ENCODE measurements at regions of chr1 and their contacts with region 1.

Region 1: GRCh38 chr1:67500413-67500959 is 70.3 kb upstream of the SERBP1 start:
- DNase-seq: peak; percentile 87
- ATAC-seq: peak; percentile 99
- H3K4me3 ChIP-seq: peak overlapping the region in 1 of 2 experiments; percentile 30; a peak in 1 of 4 replicates
- H3K27ac ChIP-seq: no peak overlapping the region
- H3K4me1 ChIP-seq: peaks cover 0 to 4% of the 10 kb centered on the region in 2 experiments; a peak in 1 of 4 replicates
- H3K27me3 ChIP-seq: no peaks in the 10 kb centered on the region
- CTCF ChIP-seq: peak; percentile 96 to 98 (median 98)
- POLR2A ChIP-seq: no peak
- RAD21 ChIP-seq: peak; percentile 100

Region 2: GRCh38 chr1:66764994-66765578 is 735.4 kb before region 1 on chr1:
- CTCF ChIA-PET with region 1: interaction called, 4 read pairs
- POLR2A ChIA-PET with region 1: no interaction called
- RAD21 ChIA-PET with region 1: no interaction called
- intact Hi-C with region 1: loop called (anchors 2 kb)
- DNase-seq: peak; percentile 31
- ATAC-seq: peak; percentile 82
- H3K4me3 ChIP-seq: no peak overlapping the region
- H3K27ac ChIP-seq: no peak overlapping the region
- H3K4me1 ChIP-seq: 0 out of 4 replicates have a peak, but pooled peaks cover 0 to 2% of the 10 kb centered on the region in 2 experiments
- H3K27me3 ChIP-seq: no peaks in the 10 kb centered on the region
- CTCF ChIP-seq: peak; percentile 62 to 86 (median 86)
- POLR2A ChIP-seq: no peak
- RAD21 ChIP-seq: peak; percentile 91

Region 3: GRCh38 chr1:66996018-66996682 is 504.3 kb before region 1 on chr1:
- CTCF ChIA-PET with region 1: interaction called, 5 read pairs
- POLR2A ChIA-PET with region 1: no interaction called
- RAD21 ChIA-PET with region 1: no interaction called
- intact Hi-C with region 1: loop called (anchors 10 kb)
- DNase-seq: peak; percentile 45
- ATAC-seq: peak; percentile 81
- H3K4me3 ChIP-seq: no peak overlapping the region
- H3K27ac ChIP-seq: no peak overlapping the region
- H3K4me1 ChIP-seq: no peaks in the 10 kb centered on the region
- H3K27me3 ChIP-seq: no peaks in the 10 kb centered on the region
- CTCF ChIP-seq: peak; percentile 82 to 96 (median 88)
- POLR2A ChIP-seq: no peak
- RAD21 ChIP-seq: peak; percentile 95

Region 4: DNA sequence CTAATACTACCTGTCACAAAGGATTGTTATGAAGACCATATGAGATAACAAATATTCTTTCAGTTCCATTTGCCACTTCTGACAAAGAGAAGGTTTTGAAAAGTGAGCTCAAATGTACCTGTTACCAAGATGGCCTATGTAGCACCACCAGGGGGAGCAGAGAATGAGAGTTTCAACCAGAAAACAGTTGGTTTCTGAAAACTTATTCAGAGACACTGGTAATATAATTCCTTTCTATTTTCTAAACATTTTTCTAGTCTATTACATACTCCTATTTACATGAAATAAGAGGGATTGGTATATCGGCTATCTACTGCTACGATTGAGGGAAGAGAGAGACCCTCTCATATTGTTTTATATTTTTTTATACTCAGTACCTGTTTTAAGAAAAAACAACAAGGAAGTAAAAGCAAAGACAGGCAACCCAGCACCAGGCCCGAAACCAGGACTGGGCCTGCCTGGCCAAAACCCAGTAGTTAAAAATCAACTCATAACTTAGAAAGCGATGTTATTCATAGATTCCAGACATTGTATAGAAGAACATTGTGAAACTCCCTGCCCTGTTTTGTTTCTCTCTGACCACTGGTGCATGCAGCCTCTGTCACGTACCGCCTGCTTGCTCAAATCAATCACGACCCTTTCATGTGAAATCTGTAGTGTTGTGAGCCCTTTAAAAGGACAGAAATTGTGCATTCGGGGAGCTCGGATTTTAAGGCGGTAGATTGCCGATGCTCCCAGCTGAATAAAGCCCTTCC is 285.9 kb before region 1 on chr1:
- CTCF ChIA-PET with region 1: interaction called, 94 read pairs
- POLR2A ChIA-PET with region 1: interaction called, 6 read pairs
- RAD21 ChIA-PET with region 1: interaction called in 1 of 2 experiments, 11 read pairs
- intact Hi-C with region 1: loop called (anchors 1 kb)
- DNase-seq: peak; percentile 19
- ATAC-seq: peak; percentile 65
- H3K4me3 ChIP-seq: no peak overlapping the region
- H3K27ac ChIP-seq: no peak overlapping the region
- H3K4me1 ChIP-seq: no peaks in the 10 kb centered on the region
- H3K27me3 ChIP-seq: no peaks in the 10 kb centered on the region
- CTCF ChIP-seq: peak; percentile 53 to 74 (median 74); a peak in 5 of 6 replicates
- POLR2A ChIP-seq: no peak
- RAD21 ChIP-seq: peak; percentile 50

Region 5: DNA sequence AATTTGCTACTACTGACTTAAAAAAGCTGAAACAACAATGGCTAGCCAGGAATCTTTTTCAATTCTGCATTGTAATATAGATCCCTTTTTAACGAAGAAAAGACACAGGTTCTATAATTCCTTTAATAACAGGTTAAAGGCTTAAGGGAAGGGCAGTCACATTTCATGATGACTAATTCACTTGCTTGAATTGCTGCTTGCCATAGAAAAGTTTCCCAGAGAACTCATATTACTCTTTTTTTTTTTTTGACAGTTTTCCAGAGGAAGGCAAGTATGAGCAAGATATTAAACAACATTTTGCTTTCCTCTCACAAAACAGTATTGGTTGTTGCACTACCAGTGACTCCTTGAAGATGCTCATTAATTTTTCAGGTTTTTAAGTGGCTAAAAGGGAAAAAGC is 273.3 kb before region 1 on chr1:
- CTCF ChIA-PET with region 1: no interaction called
- POLR2A ChIA-PET with region 1: interaction called, 3 read pairs
- RAD21 ChIA-PET with region 1: no interaction called
- intact Hi-C with region 1: loop called (anchors 5 kb)
- DNase-seq: no peak
- ATAC-seq: no peak
- H3K4me3 ChIP-seq: no peak overlapping the region
- H3K27ac ChIP-seq: no peak overlapping the region
- H3K4me1 ChIP-seq: no peaks in the 10 kb centered on the region
- H3K27me3 ChIP-seq: no peaks in the 10 kb centered on the region
- CTCF ChIP-seq: no peak
- POLR2A ChIP-seq: no peak
- RAD21 ChIP-seq: no peak

Region 6: GRCh38 chr1:67347688-67348472 is 152.6 kb before region 1 on chr1:
- CTCF ChIA-PET with region 1: interaction called, 41 read pairs
- POLR2A ChIA-PET with region 1: no interaction called
- RAD21 ChIA-PET with region 1: interaction called in 1 of 2 experiments, 4 read pairs
- intact Hi-C with region 1: loop called (anchors 1 kb)
- DNase-seq: peak; percentile 54
- ATAC-seq: peak; percentile 98
- H3K4me3 ChIP-seq: no peak overlapping the region
- H3K27ac ChIP-seq: no peak overlapping the region
- H3K4me1 ChIP-seq: no peaks in the 10 kb centered on the region
- H3K27me3 ChIP-seq: no peaks in the 10 kb centered on the region
- CTCF ChIP-seq: peak; percentile 81 to 86 (median 82); a peak in 5 of 6 replicates
- POLR2A ChIP-seq: no peak
- RAD21 ChIP-seq: peak; percentile 91

Region 7: DNA sequence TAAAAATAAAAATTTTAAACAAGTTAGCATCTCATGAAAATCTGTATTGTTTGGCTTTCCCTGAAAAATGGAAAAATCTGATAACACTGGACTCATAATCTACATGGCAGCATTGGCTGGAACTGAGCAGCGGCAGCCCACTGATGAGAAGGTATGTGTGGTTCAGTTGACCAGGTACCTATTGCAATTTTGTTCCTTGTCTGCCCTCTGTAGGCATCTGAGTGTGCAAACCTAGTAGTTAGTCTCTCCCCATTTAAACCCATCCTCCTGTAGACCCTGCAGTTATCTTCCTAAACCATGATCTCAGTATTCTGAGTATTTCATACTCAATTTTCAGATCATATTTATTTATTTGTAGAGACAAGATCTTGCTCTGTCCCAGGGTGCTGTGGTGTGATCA is 10.8 kb before region 1 on chr1:
- CTCF ChIA-PET with region 1: interaction called, 10 read pairs
- POLR2A ChIA-PET with region 1: no interaction called
- RAD21 ChIA-PET with region 1: no interaction called
- intact Hi-C with region 1: no loop called
- DNase-seq: peak; percentile 13
- ATAC-seq: peak; percentile 78
- H3K4me3 ChIP-seq: no peak overlapping the region
- H3K27ac ChIP-seq: no peak overlapping the region
- H3K4me1 ChIP-seq: no peaks in the 10 kb centered on the region
- H3K27me3 ChIP-seq: no peaks in the 10 kb centered on the region
- CTCF ChIP-seq: peak; percentile 7 to 49 (median 29); a peak in 2 of 6 replicates
- POLR2A ChIP-seq: no peak
- RAD21 ChIP-seq: peak; percentile 76

Measured in HCT116 (cell line).